ENCODE measurements at regions of chr2 and their contacts with region 1.

Region 1: GRCh38 chr2:241637000-241637791 is at the starts of genes ATG4B and THAP4:
- DNase-seq: peak; percentile 89 to 94 (median 92)
- ATAC-seq: peak; percentile 78 to 92 (median 90)
- H3K4me3 ChIP-seq: peak within 1 kb of the TSS; percentile 55 to 94 (median 88)
- H3K27ac ChIP-seq: peak within 1 kb of the TSS; percentile 96 to 100 (median 99)
- H3K4me1 ChIP-seq: peaks cover 8 to 57% (median 45%) of the 10 kb centered on the region in 12 donors
- H3K27me3 ChIP-seq: no peaks in the 10 kb centered on the region
- CTCF ChIP-seq: no peak
- POLR2A ChIP-seq: peak in 1 of 2 donors; percentile 59
- total RNA-seq, gene ATG4B: 37.8 to 67.9 (median 48.3) TPM
- total RNA-seq, gene THAP4: 61.7 to 106 (median 74.2) TPM

Region 2: GRCh38 chr2:241540771-241541561 is 96.2 kb before region 1 on chr2:
- intact Hi-C with region 1: no loop called
- DNase-seq: peak in 4 of 5 donors; percentile 41 to 75 (median 48)
- ATAC-seq: peak in 3 of 4 donors; percentile 49 to 79 (median 70)
- H3K4me3 ChIP-seq: peak overlapping the region; percentile 14 to 56 (median 44)
- H3K27ac ChIP-seq: peak overlapping the region in 2 of 12 donors; percentile 43 to 79
- H3K4me1 ChIP-seq: peaks cover 0 to 29% (median 14%) of the 10 kb centered on the region in 12 donors
- H3K27me3 ChIP-seq: peaks cover 0 to 26% (median 6%) of the 10 kb centered on the region in 9 donors
- CTCF ChIP-seq: no peak
- POLR2A ChIP-seq: no peak

Region 3: GRCh38 chr2:241609859-241610793 is 27.1 kb before region 1 on chr2:
- intact Hi-C with region 1: loop called in 1 of 10 experiments (anchors 2 kb)
- DNase-seq: peak; percentile 79 to 92 (median 89)
- ATAC-seq: peak; percentile 81 to 96 (median 96)
- H3K4me3 ChIP-seq: peak overlapping the region; percentile 54 to 69 (median 61)
- H3K27ac ChIP-seq: peak overlapping the region; percentile 3 to 90 (median 72)
- H3K4me1 ChIP-seq: peaks cover 0 to 34% (median 16%) of the 10 kb centered on the region in 12 donors
- H3K27me3 ChIP-seq: no peaks in the 10 kb centered on the region
- CTCF ChIP-seq: peak; percentile 55 to 82 (median 70)
- POLR2A ChIP-seq: peak in 1 of 2 donors; percentile 47

Region 4: GRCh38 chr2:241617431-241618154 is 19.6 kb before region 1 on chr2:
- intact Hi-C with region 1: loop called in 2 of 10 experiments (anchors 1 to 2 kb)
- DNase-seq: peak; percentile 59 to 85 (median 75)
- ATAC-seq: peak; percentile 57 to 87 (median 60)
- H3K4me3 ChIP-seq: peak overlapping the region; percentile 17 to 52 (median 45)
- H3K27ac ChIP-seq: peak overlapping the region; percentile 62 to 92 (median 80)
- H3K4me1 ChIP-seq: peaks cover 0 to 47% (median 24%) of the 10 kb centered on the region in 12 donors
- H3K27me3 ChIP-seq: no peaks in the 10 kb centered on the region
- CTCF ChIP-seq: no peak
- POLR2A ChIP-seq: no peak

Region 5: GRCh38 chr2:241680827-241681599 is 43.8 kb after region 1 on chr2:
- intact Hi-C with region 1: no loop called
- DNase-seq: peak in 1 of 5 donors; percentile 49
- ATAC-seq: peak; percentile 25 to 86 (median 70)
- H3K4me3 ChIP-seq: no peak overlapping the region
- H3K27ac ChIP-seq: peak overlapping the region in 1 of 12 donors; percentile 37
- H3K4me1 ChIP-seq: peaks cover 0 to 15% (median 8%) of the 10 kb centered on the region in 12 donors
- H3K27me3 ChIP-seq: no peaks in the 10 kb centered on the region
- CTCF ChIP-seq: no peak
- POLR2A ChIP-seq: no peak

Measured in heart left ventricle (tissue), 16 donors.